Activated T-helper 1 cell treated with anti-CD3 and anti-CD28 coated beads, Interleukin-12 subunit alpha, Interleukin-12 subunit beta, Interleukin-2, Interleukin-4 antibody, amounts not matched to agents 30 ng/mL and 10 ng/mL and 1 ng/mL, durations not matched to agents 14 hours and 24 hours and 36 hours (primary cell): ENCODE measurements at regions of chr2 and their contacts with region 1.

Region 1: DNA sequence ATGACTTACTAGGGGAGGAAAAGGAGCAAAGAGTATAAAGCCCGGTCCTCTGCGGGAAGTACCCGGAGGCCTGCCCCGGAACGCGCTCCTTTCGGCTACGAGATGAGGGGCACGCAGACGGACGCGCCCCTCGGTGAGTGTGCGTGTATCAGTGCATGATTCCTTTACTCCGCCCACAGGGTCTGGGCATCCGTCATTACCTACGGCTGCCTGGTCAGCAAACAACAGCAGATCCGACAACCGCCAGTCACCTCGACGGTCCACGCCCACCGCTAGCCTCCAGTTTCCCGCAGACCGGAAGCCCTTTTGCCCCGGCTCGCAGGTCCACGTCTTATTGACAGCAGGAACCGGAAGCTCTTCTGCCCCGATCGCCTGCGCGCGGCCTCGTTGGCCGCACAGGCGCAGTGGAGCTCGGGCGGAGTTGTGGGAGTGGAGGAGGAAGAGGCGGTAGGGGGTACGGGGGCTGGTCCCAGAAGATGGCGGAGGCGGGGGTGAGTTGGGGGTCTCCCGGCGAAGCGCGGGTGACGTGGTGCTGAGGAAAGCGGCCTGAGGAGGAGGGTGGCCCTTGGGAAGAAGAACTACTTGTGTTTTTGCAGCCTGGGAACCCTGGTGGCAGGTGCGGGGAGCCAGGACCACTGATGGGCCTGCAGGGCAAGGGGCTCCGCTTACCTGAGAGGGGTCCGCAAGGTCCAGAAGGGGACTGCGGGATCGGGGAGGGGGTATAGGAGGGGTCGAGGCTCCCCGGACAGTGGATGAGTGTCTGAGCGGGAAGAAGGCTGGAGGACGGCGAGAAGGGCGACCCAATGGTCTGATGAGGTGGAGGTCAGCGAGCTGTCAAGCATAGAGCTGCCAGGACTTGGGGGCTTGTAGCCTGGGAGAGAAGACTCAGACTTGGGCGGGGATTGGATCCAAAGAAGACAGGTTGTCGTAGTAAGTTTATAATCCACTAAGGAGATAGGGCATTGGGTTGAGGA is at the start of gene INSIG2:
- DNase-seq: peak; percentile 92
- H3K4me3 Mint-ChIP-seq: peak within 1 kb of the TSS; percentile 94
- H3K27ac Mint-ChIP-seq: peak within 1 kb of the TSS; percentile 95
- H3K4me1 Mint-ChIP-seq: peaks cover 20% of the 10 kb centered on the region
- H3K27me3 Mint-ChIP-seq: no peaks in the 10 kb centered on the region
- total RNA-seq, gene INSIG2: 31.3 and 34.6 TPM in 2 replicates

Region 2: DNA sequence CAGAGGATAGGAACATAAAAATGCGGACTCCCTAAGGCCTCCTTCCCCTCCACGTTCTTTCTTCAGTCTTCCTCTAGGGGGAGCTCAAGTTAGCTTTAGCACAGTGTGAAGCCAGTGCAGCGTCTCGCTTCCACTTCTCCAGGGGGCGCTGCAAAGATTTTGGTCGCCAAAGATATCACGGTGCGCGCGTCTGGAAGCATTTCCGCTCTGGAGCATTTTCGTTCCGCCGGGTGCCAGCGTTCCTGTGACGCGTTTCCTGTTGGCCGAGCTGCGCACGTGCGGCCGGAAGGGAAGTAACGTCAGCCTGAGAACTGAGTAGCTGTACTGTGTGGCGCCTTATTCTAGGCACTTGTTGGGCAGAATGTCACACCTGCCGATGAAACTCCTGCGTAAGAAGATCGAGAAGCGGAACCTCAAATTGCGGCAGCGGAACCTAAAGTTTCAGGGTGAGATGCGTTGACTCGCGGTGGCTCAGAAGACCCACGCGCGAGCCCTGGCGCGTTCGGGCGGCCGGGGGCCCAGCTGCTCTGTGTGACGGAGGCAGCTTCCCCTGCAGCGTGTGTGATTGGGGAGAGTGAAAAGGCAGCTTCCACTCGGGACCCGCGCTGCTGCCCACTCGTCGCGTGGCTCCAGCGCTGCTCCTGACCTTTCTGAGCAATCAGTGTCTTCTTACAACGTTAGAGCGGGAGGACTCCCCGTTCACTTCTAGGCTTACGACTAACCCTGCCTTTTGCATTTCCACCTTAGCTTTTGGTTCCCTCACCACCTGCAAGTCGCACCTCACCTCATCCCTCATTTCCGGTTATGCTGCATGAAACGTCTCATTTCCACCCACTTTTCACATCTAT is 273.7 kb before region 1 on chr2 and contains the start of gene DDX18:
- intact Hi-C with region 1: loop called (anchors 1 kb)
- DNase-seq: peak; percentile 96
- H3K4me3 Mint-ChIP-seq: peak within 1 kb of the TSS; percentile 90
- H3K27ac Mint-ChIP-seq: peak within 1 kb of the TSS; percentile 94
- H3K4me1 Mint-ChIP-seq: peaks cover 40% of the 10 kb centered on the region
- H3K27me3 Mint-ChIP-seq: peaks cover 3% of the 10 kb centered on the region
- total RNA-seq, gene DDX18: 133 and 143 TPM in 2 replicates

Region 3: DNA sequence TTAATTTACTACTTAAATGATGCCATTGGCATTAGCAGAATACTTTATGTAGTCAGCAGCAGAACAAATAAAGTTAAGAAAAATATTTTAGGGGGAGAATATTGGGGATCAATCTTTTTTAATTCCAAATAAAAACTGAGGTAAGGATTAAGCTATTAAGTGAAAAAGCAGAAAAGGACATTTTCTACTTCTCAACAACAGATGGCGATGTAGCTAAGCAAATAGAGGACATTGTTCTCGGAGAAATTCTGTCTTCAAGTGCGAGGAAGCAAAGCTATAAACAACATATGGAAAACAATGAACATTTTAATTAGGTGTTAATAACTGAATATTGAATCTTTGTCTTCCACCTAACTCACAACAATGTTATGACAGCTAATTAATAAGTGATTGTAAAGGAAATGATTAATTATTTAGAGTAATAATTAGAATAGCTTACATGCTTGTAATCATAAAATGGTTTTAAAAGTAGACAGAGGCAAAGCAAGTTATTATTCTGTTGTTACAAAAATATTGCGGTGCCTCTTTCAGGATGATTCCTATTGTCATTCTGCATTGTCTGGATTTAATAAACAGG is 41.6 kb before region 1 on chr2:
- intact Hi-C with region 1: loop called (anchors 1 kb)
- DNase-seq: no peak
- H3K4me3 Mint-ChIP-seq: no peak overlapping the region
- H3K27ac Mint-ChIP-seq: no peak overlapping the region
- H3K4me1 Mint-ChIP-seq: peaks cover 6% of the 10 kb centered on the region
- H3K27me3 Mint-ChIP-seq: peaks cover 15% of the 10 kb centered on the region

Region 4: GRCh38 chr2:118103951-118104940 is 15.9 kb after region 1 on chr2:
- intact Hi-C with region 1: loop called (anchors 2 kb)
- DNase-seq: no peak
- H3K4me3 Mint-ChIP-seq: no peak overlapping the region
- H3K27ac Mint-ChIP-seq: peak overlapping the region; percentile 41
- H3K4me1 Mint-ChIP-seq: peaks cover 61% of the 10 kb centered on the region
- H3K27me3 Mint-ChIP-seq: no peaks in the 10 kb centered on the region

Region 5: GRCh38 chr2:118177884-118178283 is 89.5 kb after region 1 on chr2:
- intact Hi-C with region 1: loop called (anchors 1 kb)
- DNase-seq: no peak
- H3K4me3 Mint-ChIP-seq: no peak overlapping the region
- H3K27ac Mint-ChIP-seq: peak overlapping the region; percentile 98
- H3K4me1 Mint-ChIP-seq: peaks cover 48% of the 10 kb centered on the region
- H3K27me3 Mint-ChIP-seq: no peaks in the 10 kb centered on the region

Region 6: GRCh38 chr2:118221666-118222594 is 133.6 kb after region 1 on chr2:
- intact Hi-C with region 1: loop called (anchors 1 kb)
- DNase-seq: peak; percentile 40
- H3K4me3 Mint-ChIP-seq: no peak overlapping the region
- H3K27ac Mint-ChIP-seq: no peak overlapping the region
- H3K4me1 Mint-ChIP-seq: peaks cover 40% of the 10 kb centered on the region
- H3K27me3 Mint-ChIP-seq: peaks cover 54% of the 10 kb centered on the region

Region 7: GRCh38 chr2:119366649-119367471 is 1278.5 kb after region 1 on chr2 and contains the starts of genes C2orf76 and DBI:
- intact Hi-C with region 1: loop called (anchors 1 kb)
- DNase-seq: peak; percentile 93
- H3K4me3 Mint-ChIP-seq: peak within 1 kb of the TSS; percentile 99
- H3K27ac Mint-ChIP-seq: peak within 1 kb of the TSS; percentile 99
- H3K4me1 Mint-ChIP-seq: peaks cover 46% of the 10 kb centered on the region
- H3K27me3 Mint-ChIP-seq: no peaks in the 10 kb centered on the region
- total RNA-seq, gene C2orf76: 10.3 and 10.7 TPM in 2 replicates
- total RNA-seq, gene DBI: 142 and 146 TPM in 2 replicates